Calu3 (cell line): ENCODE measurements at regions of chr22 and their contacts with region 1.

Region 1: GRCh38 chr22:24938741-24939341 is 7.7 kb downstream of the LHFPL7 start:
- DNase-seq: peak; percentile 57
- H3K4me3 Mint-ChIP-seq: no peak overlapping the region
- H3K27ac Mint-ChIP-seq: no peak overlapping the region
- H3K4me1 Mint-ChIP-seq: peaks cover 2% of the 10 kb centered on the region
- H3K27me3 Mint-ChIP-seq: no peaks in the 10 kb centered on the region
- CTCF ChIP-seq: peak; percentile 70

Region 2: DNA sequence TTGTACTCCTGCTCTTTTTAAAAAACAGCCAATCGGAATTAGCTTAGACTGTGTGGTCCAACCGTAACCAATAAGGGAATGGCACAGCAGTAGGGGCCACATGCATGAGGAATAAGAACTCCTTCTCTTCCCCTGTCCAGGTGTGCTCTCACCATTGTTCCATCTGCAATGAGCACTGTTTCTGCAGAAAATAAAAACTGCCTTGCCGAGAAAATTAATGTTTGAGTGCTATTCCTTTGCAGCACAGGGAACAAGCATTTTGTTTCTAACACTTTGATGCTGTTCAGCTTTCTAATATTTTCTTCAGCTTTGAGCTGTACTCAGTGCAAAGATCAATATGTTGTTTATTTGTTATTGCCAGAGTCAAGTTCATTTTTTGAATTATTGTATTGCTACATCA is 222.2 kb before region 1 on chr22:
- CTCF ChIA-PET with region 1: no interaction called
- intact Hi-C with region 1: no loop called
- DNase-seq: no peak
- H3K4me3 Mint-ChIP-seq: no peak overlapping the region
- H3K27ac Mint-ChIP-seq: no peak overlapping the region
- H3K4me1 Mint-ChIP-seq: no peaks in the 10 kb centered on the region
- H3K27me3 Mint-ChIP-seq: peaks cover 91% of the 10 kb centered on the region
- CTCF ChIP-seq: no peak

Region 3: GRCh38 chr22:25048659-25049647 is 110.1 kb after region 1 on chr22:
- CTCF ChIA-PET with region 1: interaction called, 13 read pairs
- intact Hi-C with region 1: loop called (anchors 1 kb)
- DNase-seq: peak; percentile 83
- H3K4me3 Mint-ChIP-seq: no peak overlapping the region
- H3K27ac Mint-ChIP-seq: no peak overlapping the region
- H3K4me1 Mint-ChIP-seq: peaks cover 8% of the 10 kb centered on the region
- H3K27me3 Mint-ChIP-seq: no peaks in the 10 kb centered on the region
- CTCF ChIP-seq: peak; percentile 95

Region 4: GRCh38 chr22:25057013-25057881 is 118.4 kb after region 1 on chr22:
- CTCF ChIA-PET with region 1: interaction called, 11 read pairs
- intact Hi-C with region 1: loop called (anchors 1 kb)
- DNase-seq: peak; percentile 86
- H3K4me3 Mint-ChIP-seq: no peak overlapping the region
- H3K27ac Mint-ChIP-seq: no peak overlapping the region
- H3K4me1 Mint-ChIP-seq: no peaks in the 10 kb centered on the region
- H3K27me3 Mint-ChIP-seq: no peaks in the 10 kb centered on the region
- CTCF ChIP-seq: peak; percentile 95

Region 5: DNA sequence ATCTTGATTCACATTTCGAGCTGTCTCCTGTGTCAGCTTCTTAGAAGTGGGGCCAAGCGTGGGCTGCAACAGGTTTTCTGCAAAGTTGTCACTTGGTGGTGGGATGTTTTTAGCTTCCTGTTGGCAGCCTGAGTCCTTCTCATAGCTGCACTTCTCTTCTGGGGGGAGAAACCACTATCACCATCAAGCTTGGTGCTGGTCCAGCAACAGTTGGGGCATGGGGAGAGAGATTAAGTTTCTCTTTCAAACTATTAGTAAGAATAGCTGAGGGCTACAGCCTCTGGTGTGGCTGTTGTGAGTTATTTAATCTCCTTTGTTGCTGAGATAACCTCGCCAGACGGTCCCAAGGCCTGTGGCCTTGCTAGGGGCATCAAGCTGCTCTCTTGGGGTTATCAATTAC is 137.5 kb after region 1 on chr22:
- CTCF ChIA-PET with region 1: no interaction called
- intact Hi-C with region 1: no loop called
- DNase-seq: no peak
- H3K4me3 Mint-ChIP-seq: no peak overlapping the region
- H3K27ac Mint-ChIP-seq: no peak overlapping the region
- H3K4me1 Mint-ChIP-seq: peaks cover 2% of the 10 kb centered on the region
- H3K27me3 Mint-ChIP-seq: no peaks in the 10 kb centered on the region
- CTCF ChIP-seq: no peak